ENCODE measurements at regions of chr20 and their contacts with region 1.

Region 1: GRCh38 chr20:17682103-17682888 is at the start of gene RRBP1:
- DNase-seq: peak; percentile 100
- total RNA-seq, gene RRBP1: 128 TPM

Region 2: DNA sequence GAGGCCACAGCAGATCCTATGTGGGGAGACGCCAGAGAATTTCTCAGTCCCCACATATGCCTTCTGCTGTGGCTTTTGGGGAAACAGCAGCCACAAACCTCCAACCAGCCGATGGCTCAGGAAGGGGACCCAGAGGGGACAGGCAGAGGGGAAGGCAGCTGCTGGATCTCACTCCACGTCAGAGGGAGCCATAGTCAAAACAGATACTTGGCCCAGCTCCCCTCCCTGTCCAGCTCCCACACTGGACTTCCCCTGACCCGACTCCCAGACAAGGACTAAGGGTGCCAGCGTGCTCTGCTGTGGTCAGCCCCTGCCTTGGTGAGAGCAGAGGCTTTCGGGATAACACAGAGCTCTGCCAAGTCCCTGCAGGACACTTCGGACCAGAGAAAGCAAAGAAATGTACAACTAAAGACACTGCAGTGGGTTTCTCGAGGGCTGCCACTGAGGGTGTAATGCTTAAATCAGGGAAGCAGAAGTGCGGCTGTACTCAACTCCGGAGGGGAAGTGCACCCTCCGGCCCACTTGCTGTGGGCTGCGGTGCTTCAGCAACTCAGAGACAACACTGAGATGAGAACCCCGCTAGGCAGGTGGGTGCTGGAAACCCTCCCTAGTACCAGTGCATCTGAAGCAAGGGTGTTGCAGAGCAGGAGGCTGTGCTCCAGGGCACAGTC is 47.5 kb before region 1 on chr20:
- intact Hi-C with region 1: no loop called
- DNase-seq: peak; percentile 91

Region 3: GRCh38 chr20:17662333-17663039 is 19.8 kb before region 1 on chr20:
- intact Hi-C with region 1: no loop called
- DNase-seq: peak; percentile 89

Region 4: DNA sequence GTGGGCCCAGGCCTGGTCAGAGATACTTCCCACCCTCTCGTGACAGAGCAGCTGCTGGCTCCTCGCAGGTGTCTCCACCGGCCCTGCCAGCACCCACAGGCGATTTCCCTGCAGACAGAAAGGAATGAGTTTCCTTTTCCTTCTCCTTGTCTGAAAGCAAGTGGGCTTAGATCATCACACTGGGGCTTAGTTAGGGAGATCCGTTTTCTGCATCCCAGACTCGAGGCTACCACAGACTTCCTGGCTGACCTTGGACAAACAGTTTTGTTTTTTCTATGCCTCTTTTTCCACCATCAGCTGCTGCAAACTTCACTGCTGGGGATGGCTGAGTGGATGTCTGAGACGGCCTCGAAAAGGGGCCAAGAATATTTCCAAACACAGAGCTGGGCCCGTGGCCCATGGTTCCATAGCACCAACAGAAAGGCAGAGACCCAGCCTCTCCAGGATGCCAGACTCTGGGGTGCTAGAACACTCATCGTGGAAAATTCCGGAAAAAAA is 104.0 kb after region 1 on chr20:
- intact Hi-C with region 1: loop called in 1 of 2 experiments (anchors 10 kb)
- DNase-seq: no peak

Region 5: DNA sequence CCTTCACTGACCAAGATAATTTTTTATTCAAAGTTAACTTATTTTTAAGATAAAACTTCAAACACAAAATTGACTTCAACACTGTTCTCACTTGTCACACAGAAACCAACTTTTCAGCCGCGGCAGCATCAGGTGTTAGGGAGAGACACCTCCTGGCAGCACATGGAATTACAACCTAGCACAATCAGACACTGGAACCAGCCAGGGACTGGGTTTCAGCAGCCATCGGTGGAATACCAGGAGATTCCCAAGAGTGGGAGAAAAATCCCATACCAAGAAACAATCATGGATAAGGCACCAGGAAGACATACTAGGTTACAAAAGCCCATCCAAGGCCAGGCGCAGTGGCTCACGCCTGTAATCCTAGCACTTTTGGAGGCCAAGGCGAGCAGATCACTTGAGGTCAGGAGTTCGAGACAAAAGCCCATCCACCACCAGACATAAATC is 216.3 kb after region 1 on chr20:
- intact Hi-C with region 1: loop called in 1 of 2 experiments (anchors 5 kb)
- DNase-seq: peak; percentile 82